ENCODE measurements at regions of chr2 and their contacts with region 1.

Region 1: GRCh38 chr2:237060534-237061312 is 25.0 kb upstream of the COPS8 start:
- DNase-seq: no peak
- H3K4me3 ChIP-seq: no peak overlapping the region
- H3K27ac ChIP-seq: no peak overlapping the region
- H3K4me1 ChIP-seq: peaks cover 9% of the 10 kb centered on the region
- H3K27me3 ChIP-seq: no peaks in the 10 kb centered on the region
- CTCF ChIP-seq: peak; percentile 74

Region 2: DNA sequence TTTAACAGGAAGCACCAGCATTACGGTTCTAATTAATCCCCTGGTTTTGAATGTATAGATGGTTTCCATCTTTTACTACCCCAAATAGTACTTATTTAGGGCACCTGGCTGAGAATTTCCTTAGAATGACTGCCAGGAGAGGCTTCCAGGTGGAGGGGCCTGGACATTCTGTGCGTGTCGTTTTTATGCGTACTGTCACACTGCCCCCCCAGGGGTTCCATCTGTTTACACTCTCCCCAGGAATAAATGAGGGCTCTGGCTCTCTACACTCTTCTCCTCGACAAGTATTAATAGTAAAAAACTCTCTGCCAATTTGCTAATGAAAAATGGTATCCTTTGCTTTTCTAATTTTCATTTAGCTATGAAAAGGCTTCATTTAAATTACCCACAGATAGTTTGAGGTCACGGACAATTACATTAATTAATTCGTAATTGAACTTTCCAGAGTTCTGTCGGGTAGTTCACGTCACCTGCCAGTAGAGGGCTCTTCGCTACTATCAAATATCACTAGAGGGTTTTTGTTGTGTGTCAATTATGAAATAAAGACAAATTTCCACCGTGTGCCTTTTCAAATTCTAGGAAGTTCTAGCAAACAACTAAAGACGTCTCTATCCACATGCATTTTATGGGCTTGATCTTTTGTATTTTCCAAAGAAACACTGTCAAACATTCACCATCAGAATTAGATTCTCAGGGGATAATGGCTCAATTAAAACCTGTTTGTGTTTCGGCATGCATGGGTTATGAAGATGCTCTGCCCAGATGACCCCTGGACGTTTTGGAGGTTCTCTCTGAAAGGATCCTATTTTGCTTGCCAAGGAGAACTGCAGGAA is 707.7 kb before region 1 on chr2:
- intact Hi-C with region 1: loop called (anchors 5 kb)
- DNase-seq: no peak
- H3K4me3 ChIP-seq: no peak overlapping the region
- H3K27ac ChIP-seq: no peak overlapping the region
- H3K4me1 ChIP-seq: no peaks in the 10 kb centered on the region
- H3K27me3 ChIP-seq: no peaks in the 10 kb centered on the region
- CTCF ChIP-seq: peak; percentile 89

Region 3: DNA sequence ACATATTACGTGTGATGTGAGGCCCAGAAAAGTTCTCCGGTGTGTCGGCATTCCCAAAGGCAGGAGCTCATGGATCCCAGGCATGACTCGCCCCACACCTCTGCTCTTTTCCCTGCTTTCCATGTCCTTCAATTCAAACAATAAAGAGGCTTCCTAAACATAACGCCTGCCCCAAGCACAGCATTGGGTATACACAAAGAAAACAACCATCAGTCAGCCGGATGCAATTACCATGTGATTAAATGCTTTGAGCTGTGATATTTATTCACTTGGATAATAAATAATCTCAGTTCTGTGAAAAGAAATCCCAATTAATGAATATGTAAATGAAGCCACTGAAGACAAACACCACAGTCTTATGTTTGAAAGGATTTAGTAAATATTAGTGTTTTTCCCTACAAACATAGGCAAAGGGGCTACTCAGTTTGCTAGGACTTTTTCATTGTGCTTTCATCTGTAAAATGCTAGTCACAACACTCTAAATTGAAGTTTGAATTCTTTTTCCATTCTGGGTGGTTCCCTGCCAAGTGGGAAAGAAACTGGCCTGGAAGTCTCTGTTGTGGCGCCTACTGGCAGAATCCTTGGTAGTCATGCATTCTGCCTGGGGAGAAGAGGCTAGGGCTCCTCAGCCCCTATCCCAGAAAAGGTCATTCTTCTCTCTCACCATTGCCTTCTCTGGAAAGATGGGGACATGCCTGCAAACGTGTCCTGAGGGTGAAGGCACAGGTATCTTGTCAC is 208.6 kb after region 1 on chr2:
- intact Hi-C with region 1: no loop called
- DNase-seq: no peak
- H3K4me3 ChIP-seq: no peak overlapping the region
- H3K27ac ChIP-seq: no peak overlapping the region
- H3K4me1 ChIP-seq: peaks cover 4% of the 10 kb centered on the region
- H3K27me3 ChIP-seq: no peaks in the 10 kb centered on the region
- CTCF ChIP-seq: no peak

Region 4: DNA sequence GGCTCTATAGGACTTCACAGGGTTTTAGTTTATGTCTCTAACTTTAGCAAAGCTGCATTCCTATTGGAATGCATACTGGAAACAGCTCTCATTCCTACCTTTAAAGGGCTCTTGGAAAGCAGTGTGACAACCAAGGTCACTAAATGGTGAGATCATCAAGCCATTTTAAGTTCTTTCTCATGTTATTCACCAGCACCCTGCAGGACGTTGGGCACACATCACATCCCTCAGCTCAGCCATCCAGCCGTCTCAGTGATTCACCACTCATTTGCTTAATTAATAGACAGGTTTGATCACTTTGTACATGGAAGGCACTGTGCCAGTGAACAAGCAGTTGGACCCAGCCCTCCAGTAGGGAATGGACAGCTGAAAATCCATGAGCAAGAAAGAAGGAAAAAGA is 705.6 kb after region 1 on chr2:
- intact Hi-C with region 1: no loop called
- DNase-seq: no peak
- H3K4me3 ChIP-seq: no peak overlapping the region
- H3K27ac ChIP-seq: peak overlapping the region; percentile 56
- H3K4me1 ChIP-seq: peaks cover 26% of the 10 kb centered on the region
- H3K27me3 ChIP-seq: no peaks in the 10 kb centered on the region
- CTCF ChIP-seq: no peak

Measured in left ventricle myocardium inferior (tissue), 1 donor.